Head of caudate nucleus (tissue), 42 donors: ENCODE measurements at regions of chr4 and their contacts with region 1.

Region 1: DNA sequence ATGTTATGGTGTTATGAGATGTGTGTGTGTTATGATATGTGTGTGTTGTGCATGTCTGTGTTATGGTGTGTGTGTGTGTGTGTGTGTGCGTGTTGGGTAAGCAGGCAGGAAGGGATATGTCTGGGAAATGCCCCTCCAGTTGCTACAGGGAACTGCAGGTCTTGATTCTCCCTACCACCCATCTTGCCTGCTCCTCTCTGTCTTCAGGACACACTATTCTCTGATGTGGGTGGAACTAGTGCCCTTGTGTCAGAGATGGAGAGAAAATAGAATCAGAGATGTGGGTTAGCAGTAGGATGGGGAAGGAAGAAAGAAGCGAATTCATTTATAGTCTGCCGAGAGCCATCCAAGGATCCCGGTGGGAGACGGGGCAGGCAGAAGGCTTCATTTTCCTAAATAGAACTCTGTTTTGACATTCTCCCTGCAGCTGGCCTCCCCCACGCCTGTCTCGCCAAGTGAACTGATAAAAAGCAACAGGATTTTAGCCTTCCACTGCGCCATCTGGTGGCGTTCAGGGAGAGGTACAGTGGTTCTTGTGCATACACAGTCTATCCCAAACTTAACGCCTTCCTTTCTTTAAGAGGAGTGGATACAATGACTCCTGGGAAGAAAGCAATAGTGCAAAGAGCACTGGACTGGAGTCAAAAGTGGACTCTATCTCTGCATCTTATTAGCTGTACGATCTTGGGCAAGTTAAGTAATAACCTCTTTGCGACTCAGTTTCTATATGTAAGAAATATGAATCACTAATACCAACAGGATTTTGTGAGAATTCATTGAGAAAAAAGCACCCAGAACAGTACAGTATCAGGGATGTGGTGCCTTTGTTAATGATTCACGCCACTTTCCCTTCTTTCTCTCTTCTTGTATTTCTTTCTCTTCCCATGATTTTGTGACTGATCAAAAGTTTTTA is 14.1 kb upstream of the MGST2 start:
- DNase-seq: peak; percentile 70 to 93 (median 86)

Region 2: GRCh38 chr4:139506774-139507173 is 144.8 kb before region 1 on chr4:
- intact Hi-C with region 1: no loop called
- DNase-seq: no peak

Region 3: GRCh38 chr4:139606600-139607501 is 44.7 kb before region 1 on chr4:
- intact Hi-C with region 1: loop called (anchors 5 kb)
- DNase-seq: no peak

Region 4: GRCh38 chr4:140213749-140214148 is 562.2 kb after region 1 on chr4:
- intact Hi-C with region 1: no loop called
- DNase-seq: no peak